CD4-positive, alpha-beta memory T cell (primary cell): ENCODE measurements at regions of chr2 and their contacts with region 1.

Region 1: DNA sequence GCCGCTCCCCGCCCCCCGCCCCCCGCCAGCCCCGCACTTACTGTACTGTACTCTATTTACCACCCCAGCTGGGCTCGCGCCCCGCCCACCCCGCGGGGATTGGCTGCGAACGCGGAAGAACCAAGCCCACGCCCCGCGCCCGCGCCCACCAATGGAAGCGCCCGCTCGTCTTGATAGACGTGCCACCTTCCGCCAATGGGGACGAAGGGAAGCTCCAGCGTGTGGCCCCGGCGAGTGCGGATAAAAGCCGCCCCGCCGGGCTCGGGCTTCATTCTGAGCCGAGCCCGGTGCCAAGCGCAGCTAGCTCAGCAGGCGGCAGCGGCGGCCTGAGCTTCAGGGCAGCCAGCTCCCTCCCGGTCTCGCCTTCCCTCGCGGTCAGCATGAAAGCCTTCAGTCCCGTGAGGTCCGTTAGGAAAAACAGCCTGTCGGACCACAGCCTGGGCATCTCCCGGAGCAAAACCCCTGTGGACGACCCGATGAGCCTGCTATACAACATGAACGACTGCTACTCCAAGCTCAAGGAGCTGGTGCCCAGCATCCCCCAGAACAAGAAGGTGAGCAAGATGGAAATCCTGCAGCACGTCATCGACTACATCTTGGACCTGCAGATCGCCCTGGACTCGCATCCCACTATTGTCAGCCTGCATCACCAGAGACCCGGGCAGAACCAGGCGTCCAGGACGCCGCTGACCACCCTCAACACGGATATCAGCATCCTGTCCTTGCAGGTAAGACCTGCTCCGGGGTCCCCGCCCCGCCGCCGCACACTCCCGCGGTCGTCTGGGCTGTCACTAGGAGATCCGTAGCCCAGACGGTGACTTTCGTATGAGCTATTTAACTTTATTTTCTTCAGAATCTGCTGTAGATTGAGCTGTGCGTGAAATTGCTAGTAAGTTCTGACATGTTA is at the start of gene ID2:
- DNase-seq: peak; percentile 98 to 99 (median 98)
- H3K4me3 ChIP-seq: peak within 1 kb of the TSS; percentile 82 to 85
- H3K4me3 Mint-ChIP-seq: peak within 1 kb of the TSS; percentile 94 to 100 (median 99)
- H3K27ac ChIP-seq: peak within 1 kb of the TSS; percentile 74
- H3K27ac Mint-ChIP-seq: peak within 1 kb of the TSS; percentile 90 to 97 (median 96)
- H3K4me1 ChIP-seq: peaks cover 41% of the 10 kb centered on the region
- H3K4me1 Mint-ChIP-seq: peaks cover 32 to 61% (median 37%) of the 10 kb centered on the region in 4 donors
- H3K27me3 ChIP-seq: no peaks in the 10 kb centered on the region
- H3K27me3 Mint-ChIP-seq: peaks cover 9 to 18% of the 10 kb centered on the region in 2 donors
- total RNA-seq, gene ID2: 50.8 to 56.4 TPM

Region 2: GRCh38 chr2:7567646-7568045 is 1114.4 kb before region 1 on chr2:
- CTCF ChIA-PET with region 1: interaction called, 5 read pairs
- POLR2A ChIA-PET with region 1: interaction called, 21 read pairs
- intact Hi-C with region 1: loop called (anchors 2 kb)
- DNase-seq: peak in 4 of 5 donors; percentile 59 to 64 (median 60)
- H3K4me3 ChIP-seq: no peak overlapping the region
- H3K4me3 Mint-ChIP-seq: peak overlapping the region; percentile 3 to 78 (median 56)
- H3K27ac ChIP-seq: peak overlapping the region; percentile 16
- H3K27ac Mint-ChIP-seq: peak overlapping the region; percentile 48 to 93 (median 89)
- H3K4me1 ChIP-seq: peaks cover 40% of the 10 kb centered on the region
- H3K4me1 Mint-ChIP-seq: peaks cover 27 to 57% (median 46%) of the 10 kb centered on the region in 4 donors
- H3K27me3 ChIP-seq: no peaks in the 10 kb centered on the region
- H3K27me3 Mint-ChIP-seq: no peaks in the 10 kb centered on the region

Region 3: DNA sequence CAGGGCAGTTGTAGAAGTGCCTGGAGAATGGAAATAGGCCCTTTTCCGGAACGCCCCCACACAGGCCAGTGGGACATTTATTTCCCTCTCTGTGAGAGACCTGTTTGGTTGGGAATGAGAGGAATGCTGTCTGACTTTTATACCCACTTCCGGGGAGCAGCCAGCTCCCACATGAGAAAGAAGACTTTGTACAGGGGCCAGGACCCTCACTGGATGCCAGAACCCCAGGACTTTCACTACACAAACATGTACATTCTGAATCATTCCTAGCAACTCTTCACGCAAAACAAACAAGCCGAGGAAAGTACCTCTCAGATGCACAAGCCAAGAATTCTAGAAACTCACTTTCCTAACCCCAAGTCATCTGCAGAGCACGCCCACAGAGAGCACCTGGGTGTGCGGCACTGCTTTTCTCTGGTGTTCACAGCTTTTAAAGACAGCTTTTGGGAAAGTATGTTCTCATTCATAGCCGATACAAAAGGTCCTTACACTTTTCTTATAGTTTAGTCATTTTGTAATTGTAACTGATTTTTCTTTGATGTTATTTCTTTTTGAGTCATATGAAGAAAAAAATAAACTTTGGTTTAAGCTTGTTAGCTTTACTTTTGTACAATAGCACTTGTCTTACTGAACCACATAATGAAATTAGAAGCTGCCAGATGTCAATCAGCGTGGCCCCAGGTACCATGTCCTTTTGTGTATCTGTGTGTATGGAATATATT is 856.3 kb before region 1 on chr2:
- CTCF ChIA-PET with region 1: no interaction called
- POLR2A ChIA-PET with region 1: no interaction called
- intact Hi-C with region 1: loop called (anchors 10 kb)
- DNase-seq: no peak
- H3K4me3 ChIP-seq: no peak overlapping the region
- H3K4me3 Mint-ChIP-seq: peak overlapping the region in 2 of 8 donors; percentile 45 to 46
- H3K27ac ChIP-seq: no peak overlapping the region
- H3K27ac Mint-ChIP-seq: peak overlapping the region in 2 of 7 donors; percentile 54 to 61
- H3K4me1 ChIP-seq: peaks cover 9% of the 10 kb centered on the region
- H3K4me1 Mint-ChIP-seq: peaks cover 10 to 16% (median 14%) of the 10 kb centered on the region in 4 donors
- H3K27me3 ChIP-seq: no peaks in the 10 kb centered on the region
- H3K27me3 Mint-ChIP-seq: no peaks in the 10 kb centered on the region

Region 4: GRCh38 chr2:8456151-8456845 is 225.7 kb before region 1 on chr2:
- CTCF ChIA-PET with region 1: interaction called, 3 read pairs
- POLR2A ChIA-PET with region 1: interaction called, 8 read pairs
- intact Hi-C with region 1: loop called (anchors 2 kb)
- DNase-seq: peak; percentile 65 to 80 (median 74)
- H3K4me3 ChIP-seq: peak overlapping the region; percentile 12 to 45
- H3K4me3 Mint-ChIP-seq: peak overlapping the region; percentile 82 to 95 (median 88)
- H3K27ac ChIP-seq: peak overlapping the region; percentile 61
- H3K27ac Mint-ChIP-seq: peak overlapping the region; percentile 94 to 98 (median 96)
- H3K4me1 ChIP-seq: peaks cover 37% of the 10 kb centered on the region
- H3K4me1 Mint-ChIP-seq: peaks cover 21 to 47% (median 32%) of the 10 kb centered on the region in 4 donors
- H3K27me3 ChIP-seq: no peaks in the 10 kb centered on the region
- H3K27me3 Mint-ChIP-seq: no peaks in the 10 kb centered on the region

Region 5: GRCh38 chr2:8544786-8545694 is 137.0 kb before region 1 on chr2:
- CTCF ChIA-PET with region 1: interaction called, 10 read pairs
- POLR2A ChIA-PET with region 1: interaction called, 59 read pairs
- intact Hi-C with region 1: loop called (anchors 2 kb)
- DNase-seq: peak; percentile 61 to 90 (median 70)
- H3K4me3 ChIP-seq: no peak overlapping the region
- H3K4me3 Mint-ChIP-seq: peak overlapping the region; percentile 35 to 85 (median 62)
- H3K27ac ChIP-seq: peak overlapping the region; percentile 69
- H3K27ac Mint-ChIP-seq: peak overlapping the region; percentile 76 to 97 (median 94)
- H3K4me1 ChIP-seq: peaks cover 73% of the 10 kb centered on the region
- H3K4me1 Mint-ChIP-seq: peaks cover 48 to 84% (median 61%) of the 10 kb centered on the region in 4 donors
- H3K27me3 ChIP-seq: no peaks in the 10 kb centered on the region
- H3K27me3 Mint-ChIP-seq: no peaks in the 10 kb centered on the region